ENCODE measurements at regions of chr22 and their contacts with region 1.

Region 1: GRCh38 chr22:45640291-45640940 is 31.2 kb upstream of the ATXN10 start:
- DNase-seq: no peak
- H3K4me3 ChIP-seq: no peak overlapping the region
- H3K27ac ChIP-seq: peak overlapping the region; percentile 75 to 90 (median 84)
- H3K4me1 ChIP-seq: peaks cover 15 to 45% (median 27%) of the 10 kb centered on the region in 3 donors
- H3K27me3 ChIP-seq: peaks cover 0 to 50% (median 2%) of the 10 kb centered on the region in 4 donors
- CTCF ChIP-seq: no peak
- POLR2A ChIP-seq: no peak

Region 2: GRCh38 chr22:45577746-45578523 is 62.5 kb before region 1 on chr22:
- intact Hi-C with region 1: loop called (anchors 5 kb)
- DNase-seq: no peak
- H3K4me3 ChIP-seq: no peak overlapping the region
- H3K27ac ChIP-seq: peak overlapping the region in 2 of 4 donors; percentile 21 to 31
- H3K4me1 ChIP-seq: peaks cover 0 to 50% (median 3%) of the 10 kb centered on the region in 3 donors
- H3K27me3 ChIP-seq: peaks cover 0 to 19% (median 0%) of the 10 kb centered on the region in 4 donors
- CTCF ChIP-seq: peak; percentile 90 to 97 (median 94)
- POLR2A ChIP-seq: no peak